Spleen (tissue), 13 donors: ENCODE measurements at regions of chr1 and their contacts with region 1.

Region 1: GRCh38 chr1:20493839-20494608 is 8.0 kb upstream of the CAMK2N1 start:
- DNase-seq: peak; percentile 93
- H3K4me3 ChIP-seq: peak overlapping the region in 2 of 8 donors; percentile 13 to 51
- H3K27ac ChIP-seq: peak overlapping the region in 2 of 8 donors; percentile 15 to 49
- H3K4me1 ChIP-seq: peaks cover 10 to 23% (median 16%) of the 10 kb centered on the region in 6 donors
- H3K27me3 ChIP-seq: peaks cover 0 to 10% (median 0%) of the 10 kb centered on the region in 7 donors
- CTCF ChIP-seq: peak; percentile 97 to 100 (median 99)
- POLR2A ChIP-seq: no peak

Region 2: GRCh38 chr1:19918057-19918456 is 576.0 kb before region 1 on chr1:
- intact Hi-C with region 1: loop called (anchors 10 kb)
- DNase-seq: peak; percentile 89
- H3K4me3 ChIP-seq: no peak overlapping the region
- H3K27ac ChIP-seq: no peak overlapping the region
- H3K4me1 ChIP-seq: peaks cover 0 to 20% (median 4%) of the 10 kb centered on the region in 6 donors
- H3K27me3 ChIP-seq: peaks cover 0 to 2% (median 0%) of the 10 kb centered on the region in 7 donors
- CTCF ChIP-seq: peak; percentile 75 to 93 (median 90)
- POLR2A ChIP-seq: no peak

Region 3: DNA sequence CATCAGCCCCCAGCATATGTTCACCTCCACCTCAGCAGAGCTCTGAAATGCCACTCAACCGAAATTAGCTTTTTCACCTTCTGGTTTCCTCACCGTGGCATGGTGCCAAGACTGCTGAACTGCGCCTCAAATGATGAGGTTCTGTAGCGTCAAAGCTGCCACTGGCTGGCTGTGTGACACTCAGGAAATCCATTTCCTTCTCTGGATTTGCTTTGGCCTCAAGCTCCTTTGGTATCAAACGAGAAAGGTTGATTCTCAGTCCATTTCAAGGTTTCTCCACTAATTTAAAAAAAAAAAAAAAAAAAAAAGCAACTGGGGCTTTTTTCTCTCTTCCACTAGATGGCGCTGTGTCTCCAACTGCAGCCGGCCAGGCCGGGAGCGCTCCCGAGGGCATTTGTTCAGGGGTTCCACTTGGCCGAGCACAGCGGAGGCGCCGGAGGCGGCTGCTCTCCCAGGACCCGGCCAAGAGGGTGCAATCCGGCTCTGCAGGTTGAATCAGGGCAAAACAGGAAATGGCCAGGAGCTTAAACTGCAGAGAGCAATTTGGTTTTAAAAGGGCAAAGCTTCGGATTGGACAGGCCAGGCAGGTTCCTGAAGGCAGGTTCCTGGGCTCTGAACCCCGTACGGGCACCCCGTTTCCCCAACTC is 281.2 kb before region 1 on chr1:
- intact Hi-C with region 1: loop called (anchors 2 kb)
- DNase-seq: peak; percentile 88
- H3K4me3 ChIP-seq: peak overlapping the region in 1 of 8 donors; percentile 39
- H3K27ac ChIP-seq: no peak overlapping the region
- H3K4me1 ChIP-seq: peaks cover 7 to 22% (median 20%) of the 10 kb centered on the region in 6 donors
- H3K27me3 ChIP-seq: peaks cover 0 to 47% (median 0%) of the 10 kb centered on the region in 7 donors
- CTCF ChIP-seq: peak; percentile 29 to 84 (median 68)
- POLR2A ChIP-seq: no peak

Region 4: DNA sequence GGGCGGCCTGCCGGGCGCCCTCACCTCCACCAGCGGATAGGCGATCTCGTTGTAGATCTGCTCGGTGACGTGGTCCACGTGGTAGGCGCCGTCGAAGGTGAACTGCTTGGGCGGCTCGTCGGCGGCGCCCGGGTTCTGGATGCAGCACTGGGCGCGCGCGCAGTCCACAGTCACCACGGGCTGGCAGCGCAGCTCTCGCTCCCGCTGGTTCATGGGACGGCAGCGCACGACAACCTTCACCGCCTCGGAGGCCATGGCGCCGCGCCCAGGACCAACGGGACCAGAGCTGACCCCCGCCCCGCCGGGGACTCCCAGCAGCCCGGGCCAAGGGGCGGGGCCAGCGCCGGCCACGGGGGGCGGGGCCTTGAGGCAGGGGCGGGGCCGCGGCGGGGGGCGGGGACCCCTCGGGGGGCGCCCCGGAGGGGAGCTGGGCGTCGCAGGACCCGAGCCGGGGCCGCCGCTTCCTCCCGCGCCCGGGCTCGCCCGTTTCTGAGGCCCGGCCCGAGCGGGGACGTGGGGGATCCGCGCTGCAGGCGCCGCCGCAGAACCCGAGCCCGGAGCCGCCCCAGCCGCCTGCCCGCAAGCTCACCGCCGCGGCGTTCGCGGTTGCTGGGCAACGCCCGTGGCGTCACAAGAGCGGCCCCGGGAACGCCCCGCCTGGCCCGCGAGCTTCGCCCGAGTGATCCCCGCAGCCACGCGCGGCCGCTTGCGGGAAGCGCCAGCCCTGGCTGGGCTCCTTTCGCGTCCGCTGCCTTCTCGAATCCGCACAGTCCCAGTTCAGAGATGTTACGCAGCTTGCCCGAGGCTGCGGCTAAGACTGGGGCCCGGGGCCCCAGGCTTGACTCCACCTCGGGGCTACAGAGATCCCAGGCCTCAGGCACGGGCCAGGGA is 223.7 kb after region 1 on chr1 and contains the start of gene KIF17:
- intact Hi-C with region 1: no loop called
- DNase-seq: peak; percentile 92
- H3K4me3 ChIP-seq: peak within 1 kb of the TSS; percentile 23 to 77 (median 51)
- H3K27ac ChIP-seq: peak within 1 kb of the TSS in 1 of 8 donors; percentile 12
- H3K4me1 ChIP-seq: peaks cover 3 to 14% (median 13%) of the 10 kb centered on the region in 6 donors
- H3K27me3 ChIP-seq: peaks cover 0 to 43% (median 17%) of the 10 kb centered on the region in 7 donors
- CTCF ChIP-seq: no peak
- POLR2A ChIP-seq: no peak
- total RNA-seq, gene KIF17: 15.4 to 82.2 (median 57.6) TPM